Left ventricle myocardium inferior (tissue), 1 donor: ENCODE measurements at regions of chr2 and their contacts with region 1.

Region 1: GRCh38 chr2:20962939-20963557 is 80.8 kb downstream of the APOB start:
- DNase-seq: peak; percentile 44
- H3K4me3 ChIP-seq: no peak overlapping the region
- H3K27ac ChIP-seq: no peak overlapping the region
- H3K4me1 ChIP-seq: no peaks in the 10 kb centered on the region
- H3K27me3 ChIP-seq: peaks cover 95% of the 10 kb centered on the region
- CTCF ChIP-seq: peak; percentile 90

Region 2: DNA sequence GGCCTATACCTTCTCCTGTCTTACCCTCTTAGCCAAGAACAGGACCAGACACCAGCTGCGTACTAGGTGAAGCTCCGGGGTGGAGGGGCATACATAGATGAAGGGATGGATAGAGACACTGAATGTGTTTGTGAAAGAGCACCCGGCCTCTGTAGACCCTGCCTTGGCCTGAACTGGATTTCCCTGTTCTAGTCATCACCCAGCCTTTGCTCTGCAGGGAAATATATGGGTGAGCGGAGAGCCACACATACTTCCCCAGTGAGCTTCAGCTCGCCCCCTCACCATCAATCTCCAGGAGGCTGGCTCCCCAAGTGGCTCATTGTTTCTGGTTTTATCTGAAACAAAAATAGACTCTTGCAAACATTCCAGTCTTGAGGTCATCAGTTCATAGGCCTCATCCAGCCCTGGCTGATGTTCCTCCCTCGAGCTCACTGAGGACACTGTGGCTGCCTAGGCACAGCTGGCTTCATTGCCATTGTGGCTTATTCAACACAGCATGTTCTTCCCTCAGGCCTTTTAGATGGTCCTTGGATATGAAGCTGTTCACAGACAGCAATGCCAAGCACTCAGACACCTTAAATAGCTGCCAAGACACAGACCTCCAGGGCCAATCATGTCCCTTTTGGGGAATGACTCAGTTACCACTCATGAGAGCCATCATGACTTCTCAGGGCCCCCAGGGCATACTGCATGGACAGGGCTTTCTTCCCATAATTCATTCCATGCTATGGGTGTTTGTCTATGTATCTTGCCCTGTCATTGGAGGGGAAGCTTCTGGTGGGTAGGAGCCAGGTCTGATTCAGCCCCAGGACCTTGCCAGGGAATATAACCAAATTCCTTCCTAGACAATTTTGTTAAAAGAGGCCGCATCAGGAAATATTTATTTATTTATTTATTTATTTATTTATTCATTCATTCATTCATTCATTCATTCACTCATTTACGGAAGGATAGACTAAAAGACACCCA is 1143.7 kb before region 1 on chr2:
- intact Hi-C with region 1: no loop called
- DNase-seq: no peak
- H3K4me3 ChIP-seq: no peak overlapping the region
- H3K27ac ChIP-seq: no peak overlapping the region
- H3K4me1 ChIP-seq: peaks cover 20% of the 10 kb centered on the region
- H3K27me3 ChIP-seq: no peaks in the 10 kb centered on the region
- CTCF ChIP-seq: no peak

Region 3: GRCh38 chr2:20661067-20661980 is 301.7 kb before region 1 on chr2:
- intact Hi-C with region 1: loop called (anchors 2 kb)
- DNase-seq: no peak
- H3K4me3 ChIP-seq: no peak overlapping the region
- H3K27ac ChIP-seq: no peak overlapping the region
- H3K4me1 ChIP-seq: peaks cover 14% of the 10 kb centered on the region
- H3K27me3 ChIP-seq: peaks cover 96% of the 10 kb centered on the region
- CTCF ChIP-seq: peak; percentile 98

Region 4: DNA sequence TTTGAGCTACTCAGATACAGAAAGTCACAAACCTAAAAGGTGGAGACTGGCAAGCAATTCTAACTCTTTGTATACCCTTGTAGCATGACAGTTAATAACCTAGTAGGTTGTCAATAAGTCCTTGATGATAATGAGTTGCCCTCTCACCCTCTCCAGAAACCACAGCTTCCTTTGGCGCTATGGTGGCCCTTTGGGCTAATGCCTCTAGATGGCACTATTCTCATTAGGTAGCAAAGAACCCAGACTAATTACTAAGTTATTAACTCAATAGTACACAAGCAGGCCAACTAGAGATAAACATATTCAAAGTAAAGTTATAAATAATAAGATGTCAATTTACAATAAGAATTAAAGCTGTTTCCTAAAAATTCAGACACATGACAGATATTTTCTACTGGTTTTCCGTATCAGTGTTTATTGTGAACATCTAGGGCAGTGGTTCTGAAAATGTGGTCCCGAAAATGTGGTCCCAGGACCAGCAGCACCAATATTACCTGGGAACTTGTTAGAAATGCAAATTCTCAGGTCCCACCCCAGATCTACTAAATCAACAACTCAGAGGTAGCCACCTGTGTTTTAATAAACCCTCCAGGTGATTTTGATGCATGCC is 181.3 kb before region 1 on chr2:
- intact Hi-C with region 1: loop called (anchors 10 kb)
- DNase-seq: no peak
- H3K4me3 ChIP-seq: no peak overlapping the region
- H3K27ac ChIP-seq: no peak overlapping the region
- H3K4me1 ChIP-seq: no peaks in the 10 kb centered on the region
- H3K27me3 ChIP-seq: no peaks in the 10 kb centered on the region
- CTCF ChIP-seq: peak; percentile 62